GM10248 (cell line): ENCODE measurements at regions of chr11 and their contacts with region 1.

Region 1: GRCh38 chr11:117443266-117444195 is 115.9 kb downstream of the CEP164 start:
- DNase-seq: peak; percentile 66
- CTCF ChIP-seq: peak; percentile 58

Region 2: DNA sequence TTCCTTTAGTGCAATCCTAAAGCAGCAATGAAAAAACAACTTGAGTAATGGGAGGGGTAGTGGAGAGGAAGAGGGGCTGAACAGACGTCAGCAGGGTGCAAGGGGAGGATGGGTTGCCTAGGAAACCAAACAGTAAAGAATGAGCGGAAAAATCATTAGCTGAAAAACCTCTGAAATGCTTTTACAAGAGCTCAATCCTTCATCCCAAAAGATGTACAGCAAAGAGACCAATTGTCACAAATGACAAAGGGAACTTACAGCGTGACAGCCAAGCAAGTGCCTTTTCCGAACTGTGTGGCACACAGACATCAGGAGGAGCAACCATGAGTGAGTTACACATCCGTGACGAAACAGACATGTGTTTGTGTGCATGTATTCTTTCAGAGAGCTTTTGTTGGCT is 449.9 kb before region 1 on chr11:
- CTCF ChIA-PET with region 1: no interaction called
- POLR2A ChIA-PET with region 1: no interaction called
- DNase-seq: no peak
- CTCF ChIP-seq: no peak

Region 3: GRCh38 chr11:117456027-117456720 is 12.6 kb after region 1 on chr11:
- CTCF ChIA-PET with region 1: interaction called, 12 read pairs
- POLR2A ChIA-PET with region 1: no interaction called
- DNase-seq: peak; percentile 76
- CTCF ChIP-seq: no peak

Region 4: DNA sequence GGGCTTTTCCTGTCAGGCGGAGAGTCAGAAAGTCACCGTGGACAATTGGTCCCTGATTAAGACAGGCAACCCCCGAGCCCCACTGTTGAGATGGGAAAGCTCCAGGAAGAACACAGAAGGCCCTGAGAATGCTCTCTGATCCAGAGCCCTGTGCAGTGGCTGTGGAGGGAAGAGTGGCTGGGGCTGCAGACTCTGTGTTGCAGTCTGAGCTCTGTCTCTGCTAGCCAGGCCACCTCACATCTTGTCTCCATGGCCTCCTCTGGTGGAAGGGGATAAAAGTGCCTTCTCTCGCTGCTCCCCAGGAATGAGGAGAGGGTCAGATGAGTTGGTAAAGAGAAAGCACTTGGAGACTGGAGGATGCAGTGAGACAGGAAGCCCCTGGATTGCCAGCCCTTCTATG is 25.4 kb after region 1 on chr11:
- CTCF ChIA-PET with region 1: interaction called, 15 read pairs
- POLR2A ChIA-PET with region 1: no interaction called
- DNase-seq: no peak
- CTCF ChIP-seq: no peak